Activated T-helper 2 cell treated with anti-CD3 and anti-CD28 coated beads, Interferon-gamma antibody, Interleukin-2, Interleukin-4, amounts not matched to agents 10 μg/mL and 5 μg/mL and 100 μg/mL, durations not matched to agents 14 hours and 24 hours and 36 hours (primary cell): ENCODE measurements at regions of chrX and their contacts with region 1.

Region 1: GRCh38 chrX:150873616-150874015 is 24.9 kb downstream of the CD99L2 start:
- DNase-seq: no peak
- H3K4me3 Mint-ChIP-seq: no peak overlapping the region
- H3K27ac Mint-ChIP-seq: no peak overlapping the region
- H3K4me1 Mint-ChIP-seq: peaks cover 29% of the 10 kb centered on the region
- H3K27me3 Mint-ChIP-seq: no peaks in the 10 kb centered on the region

Region 2: DNA sequence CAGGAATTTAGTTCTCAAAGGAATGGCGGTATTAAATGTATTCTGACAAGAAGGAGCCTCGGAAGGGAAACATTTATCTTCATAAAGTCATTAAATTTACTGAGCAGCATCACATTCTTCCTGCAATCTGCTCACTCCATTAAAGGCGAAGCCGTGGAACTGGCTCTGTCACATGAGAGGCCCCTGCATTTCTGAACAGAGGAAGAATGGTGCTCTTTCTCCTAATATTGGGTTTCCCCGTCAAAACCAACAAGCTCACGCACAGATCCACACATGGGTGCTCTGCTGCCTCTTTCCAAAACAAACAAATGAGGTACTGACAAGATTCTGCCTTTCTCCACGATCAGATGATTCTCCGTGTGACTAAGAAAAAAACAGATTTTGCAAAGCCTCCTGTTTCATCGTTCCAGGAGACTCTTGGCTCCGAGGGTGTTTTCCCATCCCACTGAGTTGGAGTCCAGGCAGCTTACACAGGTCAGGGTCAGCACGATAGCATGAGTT is 1559.7 kb before region 1 on chrX:
- intact Hi-C with region 1: no loop called
- DNase-seq: no peak
- H3K4me3 Mint-ChIP-seq: no peak overlapping the region
- H3K27ac Mint-ChIP-seq: no peak overlapping the region
- H3K4me1 Mint-ChIP-seq: no peaks in the 10 kb centered on the region
- H3K27me3 Mint-ChIP-seq: no peaks in the 10 kb centered on the region

Region 3: GRCh38 chrX:150730719-150731118 is 142.9 kb before region 1 on chrX:
- intact Hi-C with region 1: no loop called
- DNase-seq: no peak
- H3K4me3 Mint-ChIP-seq: no peak overlapping the region
- H3K27ac Mint-ChIP-seq: no peak overlapping the region
- H3K4me1 Mint-ChIP-seq: peaks cover 11% of the 10 kb centered on the region
- H3K27me3 Mint-ChIP-seq: no peaks in the 10 kb centered on the region

Region 4: GRCh38 chrX:150813922-150814321 is 59.7 kb before region 1 on chrX:
- intact Hi-C with region 1: loop called (anchors 10 kb)
- DNase-seq: no peak
- H3K4me3 Mint-ChIP-seq: no peak overlapping the region
- H3K27ac Mint-ChIP-seq: peak overlapping the region; percentile 17
- H3K4me1 Mint-ChIP-seq: peaks cover 11% of the 10 kb centered on the region
- H3K27me3 Mint-ChIP-seq: no peaks in the 10 kb centered on the region